ENCODE measurements at regions of chr15 and their contacts with region 1.

Region 1: DNA sequence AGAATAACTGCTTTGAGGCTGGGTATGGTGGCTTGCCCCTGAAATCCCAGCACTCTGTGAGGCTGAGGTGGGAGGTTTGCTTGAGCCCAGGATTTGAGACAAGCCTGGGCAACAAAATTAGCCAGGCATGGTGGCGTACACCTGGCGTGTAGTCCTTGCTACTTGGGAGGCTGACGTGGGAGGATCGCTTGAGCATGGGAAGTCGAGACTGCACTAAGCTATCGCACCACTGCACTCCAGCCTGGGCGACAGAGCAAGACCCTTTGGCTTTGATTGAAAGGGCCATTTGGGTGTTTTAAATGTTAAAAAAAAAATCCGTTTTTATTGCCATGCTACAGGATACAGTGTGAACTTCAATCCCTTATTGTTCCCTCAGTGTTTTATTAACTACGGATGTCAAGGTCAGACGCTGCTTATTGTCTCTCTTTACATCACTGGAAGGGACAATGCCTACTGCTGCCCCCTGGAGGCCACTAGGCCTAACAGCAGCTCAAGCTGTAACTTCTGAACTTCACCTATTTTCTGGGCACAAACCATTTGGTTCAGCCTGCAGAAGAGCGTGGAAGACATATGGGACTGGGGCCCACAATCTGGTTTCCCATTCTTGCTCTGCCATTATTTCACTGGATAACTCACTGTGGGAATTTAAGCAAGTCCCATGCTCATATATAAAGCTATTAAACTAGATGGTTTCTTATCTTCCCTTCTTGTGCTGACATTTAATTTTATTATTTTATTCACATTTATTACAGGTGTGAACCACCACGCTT is 15.3 kb upstream of the IREB2 start:
- DNase-seq: no peak
- H3K4me3 ChIP-seq: no peak overlapping the region
- H3K27ac ChIP-seq: peak overlapping the region; percentile 40
- H3K4me1 ChIP-seq: peaks cover 8% of the 10 kb centered on the region
- H3K27me3 ChIP-seq: no peaks in the 10 kb centered on the region
- CTCF ChIP-seq: peak; percentile 47 to 77 (median 69)
- POLR2A ChIP-seq: no peak

Region 2: GRCh38 chr15:78131295-78132061 is 291.3 kb before region 1 on chr15 and contains the start of gene CIB2:
- intact Hi-C with region 1: loop called (anchors 10 kb)
- DNase-seq: no peak
- H3K4me3 ChIP-seq: peak within 1 kb of the TSS; percentile 63 to 77
- H3K27ac ChIP-seq: peak within 1 kb of the TSS; percentile 88
- H3K4me1 ChIP-seq: peaks cover 25% of the 10 kb centered on the region
- H3K27me3 ChIP-seq: no peaks in the 10 kb centered on the region
- CTCF ChIP-seq: peak; percentile 56 to 74 (median 71)
- POLR2A ChIP-seq: no peak
- total RNA-seq, gene CIB2: 13.0 TPM

Region 3: DNA sequence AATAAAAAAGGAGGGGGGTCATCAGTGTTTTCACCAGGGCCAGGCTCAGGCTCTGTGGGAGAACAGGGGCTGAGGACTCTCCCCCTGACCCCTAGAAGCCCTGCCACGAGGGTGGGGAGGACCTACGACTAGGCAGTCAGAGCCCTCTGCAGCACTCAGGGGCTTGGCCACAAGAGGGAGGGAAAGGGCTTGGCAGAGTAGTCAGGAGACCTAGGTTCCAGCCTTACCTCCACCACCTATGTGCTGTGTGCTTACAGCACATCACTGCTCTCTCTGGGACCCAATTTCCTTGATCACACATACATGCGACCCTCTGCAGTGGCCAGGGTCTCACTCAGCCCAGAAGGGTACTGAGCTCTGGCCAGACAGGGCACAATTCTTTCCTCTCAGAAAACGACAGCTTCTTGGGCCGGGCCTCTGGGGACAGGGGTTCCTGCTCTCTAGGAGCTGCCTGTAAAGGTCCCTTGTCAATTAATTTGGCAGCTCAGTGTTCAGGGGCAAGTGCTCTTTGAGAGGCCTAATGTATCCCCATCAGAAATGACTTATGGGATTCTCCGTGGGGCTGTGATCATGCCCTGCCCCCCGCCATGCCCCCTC is 107.0 kb before region 1 on chr15:
- intact Hi-C with region 1: loop called (anchors 10 kb)
- DNase-seq: no peak
- H3K4me3 ChIP-seq: no peak overlapping the region
- H3K27ac ChIP-seq: no peak overlapping the region
- H3K4me1 ChIP-seq: no peaks in the 10 kb centered on the region
- H3K27me3 ChIP-seq: no peaks in the 10 kb centered on the region
- CTCF ChIP-seq: no peak
- POLR2A ChIP-seq: no peak

Measured in vagina (tissue), 2 donors.